ENCODE measurements at regions of chr22 and their contacts with region 1.

Region 1: DNA sequence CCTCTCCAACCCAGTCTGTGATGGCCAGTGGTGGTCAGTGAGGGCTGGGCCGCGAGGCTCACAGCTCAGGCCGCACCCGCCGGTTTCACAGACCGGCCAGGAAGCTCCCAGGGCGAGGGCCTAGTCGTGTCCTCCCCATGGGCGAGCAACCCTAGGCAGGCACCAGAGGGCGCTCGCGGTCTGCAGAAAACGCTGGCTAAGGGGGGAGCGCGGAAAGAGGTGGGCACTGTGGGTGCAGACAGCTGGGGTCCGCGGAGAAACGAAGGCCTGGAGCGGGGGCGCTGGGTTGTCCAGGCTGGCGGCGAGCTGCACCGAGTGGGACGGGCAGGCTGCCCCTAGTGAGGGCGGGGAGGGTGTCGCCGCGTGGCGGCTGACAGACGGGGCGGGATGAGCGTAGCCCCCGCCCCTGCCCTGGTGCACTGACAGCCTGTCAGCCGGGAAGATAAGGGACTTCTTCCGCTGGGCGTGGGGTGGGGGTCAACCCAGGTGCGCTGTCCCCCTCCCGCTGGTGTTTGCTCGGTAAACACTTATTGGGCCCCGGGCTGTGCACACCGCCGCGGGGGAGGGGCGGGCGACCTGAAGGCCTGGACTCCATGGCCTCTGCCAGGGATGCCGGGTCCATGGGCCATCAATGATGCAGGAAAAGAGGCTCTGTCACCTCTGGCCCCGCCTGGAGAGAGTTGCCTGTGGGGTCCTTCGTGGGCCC is 7.5 kb downstream of the GP1BB start:
- DNase-seq: peak; percentile 96
- H3K4me3 ChIP-seq: peak overlapping the region; percentile 47 to 65; a peak in 3 of 4 replicates
- H3K27ac ChIP-seq: no peak overlapping the region
- H3K4me1 ChIP-seq: peaks cover 0 to 26% of the 10 kb centered on the region in 2 experiments; a peak in 1 of 4 replicates
- H3K27me3 ChIP-seq: no peaks in the 10 kb centered on the region
- CTCF ChIP-seq: peak; percentile 91
- EP300 ChIP-seq: no peak
- RAD21 ChIP-seq: peak; percentile 97

Region 2: GRCh38 chr22:19201869-19202798 is 528.7 kb before region 1 on chr22:
- CTCF ChIA-PET with region 1: no interaction called
- POLR2A ChIA-PET with region 1: no interaction called
- DNase-seq: no peak
- H3K4me3 ChIP-seq: no peak overlapping the region
- H3K27ac ChIP-seq: no peak overlapping the region
- H3K4me1 ChIP-seq: peaks cover 0 to 44% of the 10 kb centered on the region in 2 experiments; a peak in 2 of 4 replicates
- H3K27me3 ChIP-seq: no peaks in the 10 kb centered on the region
- CTCF ChIP-seq: no peak
- EP300 ChIP-seq: no peak
- RAD21 ChIP-seq: no peak

Region 3: DNA sequence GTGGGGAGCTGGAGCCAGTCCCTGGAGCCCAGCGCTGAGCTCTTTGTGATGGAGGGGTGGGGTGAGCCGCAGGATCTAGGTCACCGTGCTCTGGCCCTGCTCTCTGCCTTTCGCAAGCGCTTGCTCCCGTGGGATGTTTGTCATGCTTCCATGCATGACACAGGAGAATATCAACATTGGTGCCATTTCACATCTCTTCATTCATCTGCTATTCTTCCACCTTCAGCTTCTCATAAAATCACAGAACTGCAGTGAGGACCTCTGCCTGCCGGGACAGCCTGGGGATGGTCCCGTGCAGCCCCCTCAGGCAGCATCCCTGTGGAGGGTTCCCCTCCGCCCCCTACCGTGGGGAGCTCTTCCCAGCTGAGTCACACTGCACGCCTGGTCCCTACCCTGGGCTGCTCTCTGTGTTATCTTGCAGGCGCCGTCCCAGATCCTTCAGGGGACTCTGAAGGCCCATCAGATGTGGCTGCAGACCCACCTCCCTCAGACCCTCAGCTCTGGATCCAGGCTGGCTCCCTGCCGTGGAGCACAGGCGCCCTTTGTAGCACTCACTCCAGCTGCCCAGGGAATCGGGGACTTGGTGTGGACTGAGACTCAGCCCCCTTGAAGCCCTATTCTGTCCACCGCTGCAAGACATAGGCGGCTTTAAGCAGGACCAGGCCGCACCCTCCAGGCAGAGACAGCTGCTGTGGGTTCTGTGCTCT is 21.6 kb before region 1 on chr22:
- CTCF ChIA-PET with region 1: interaction called, 20 read pairs
- POLR2A ChIA-PET with region 1: no interaction called
- DNase-seq: peak; percentile 48
- H3K4me3 ChIP-seq: no peak overlapping the region
- H3K27ac ChIP-seq: no peak overlapping the region
- H3K4me1 ChIP-seq: peaks cover 0 to 20% of the 10 kb centered on the region in 2 experiments; a peak in 1 of 4 replicates
- H3K27me3 ChIP-seq: no peaks in the 10 kb centered on the region
- CTCF ChIP-seq: no peak
- EP300 ChIP-seq: no peak
- RAD21 ChIP-seq: no peak

Region 4: DNA sequence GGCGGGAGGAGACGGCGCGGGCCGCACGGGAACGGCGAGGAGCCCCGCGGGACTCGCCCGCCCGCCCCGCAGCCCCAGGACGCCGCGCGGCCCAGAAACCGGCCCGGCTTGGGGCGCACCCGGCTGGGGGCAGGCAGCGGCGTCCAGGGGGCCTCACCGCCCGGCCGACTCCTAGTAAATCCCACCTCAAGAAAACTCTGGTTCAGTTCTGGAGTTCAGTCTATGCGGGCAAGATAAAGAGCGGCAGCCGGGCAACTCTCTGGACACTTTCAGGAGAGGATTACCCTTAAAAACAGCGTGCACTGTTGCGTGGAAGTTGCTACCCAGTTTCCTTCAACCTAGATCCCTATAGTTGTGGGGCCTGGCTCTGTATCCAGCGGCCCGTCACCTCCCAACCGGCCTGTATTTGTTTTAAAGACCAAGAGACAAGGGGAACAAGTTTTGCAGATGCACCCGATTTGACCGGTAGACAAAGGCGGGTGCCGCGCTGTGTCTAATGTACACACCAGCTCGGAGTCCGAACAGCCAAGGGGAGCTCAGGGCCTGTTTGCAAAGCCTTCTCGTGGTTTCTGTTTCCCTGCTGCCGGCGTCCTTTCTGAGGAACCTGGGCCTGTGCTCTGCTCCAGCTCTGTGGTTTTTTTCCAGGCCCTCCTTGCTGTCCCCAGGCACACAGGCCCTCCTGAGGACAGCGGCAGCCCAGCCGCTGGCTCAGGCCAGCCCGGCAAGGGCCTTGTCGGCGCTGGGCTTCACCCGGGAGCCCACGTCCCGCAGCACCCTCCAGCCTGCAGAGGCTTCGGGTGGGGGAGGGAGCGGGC is 30.9 kb after region 1 on chr22:
- CTCF ChIA-PET with region 1: interaction called, 15 read pairs
- POLR2A ChIA-PET with region 1: no interaction called
- DNase-seq: no peak
- H3K4me3 ChIP-seq: no peak overlapping the region
- H3K27ac ChIP-seq: no peak overlapping the region
- H3K4me1 ChIP-seq: peaks cover 0 to 4% of the 10 kb centered on the region in 2 experiments; a peak in 2 of 4 replicates
- H3K27me3 ChIP-seq: peaks cover 32% of the 10 kb centered on the region
- CTCF ChIP-seq: no peak
- EP300 ChIP-seq: no peak
- RAD21 ChIP-seq: no peak

Region 5: GRCh38 chr22:19820628-19821522 is 90.1 kb after region 1 on chr22:
- CTCF ChIA-PET with region 1: interaction called, 11 read pairs
- POLR2A ChIA-PET with region 1: no interaction called
- DNase-seq: peak; percentile 47
- H3K4me3 ChIP-seq: no peak overlapping the region
- H3K27ac ChIP-seq: no peak overlapping the region
- H3K4me1 ChIP-seq: peaks cover 0 to 32% of the 10 kb centered on the region in 2 experiments; a peak in 1 of 4 replicates
- H3K27me3 ChIP-seq: no peaks in the 10 kb centered on the region
- CTCF ChIP-seq: no peak
- EP300 ChIP-seq: no peak
- RAD21 ChIP-seq: 0 out of 2 replicates have a peak, but pooled peaks have one; percentile 30

Region 6: DNA sequence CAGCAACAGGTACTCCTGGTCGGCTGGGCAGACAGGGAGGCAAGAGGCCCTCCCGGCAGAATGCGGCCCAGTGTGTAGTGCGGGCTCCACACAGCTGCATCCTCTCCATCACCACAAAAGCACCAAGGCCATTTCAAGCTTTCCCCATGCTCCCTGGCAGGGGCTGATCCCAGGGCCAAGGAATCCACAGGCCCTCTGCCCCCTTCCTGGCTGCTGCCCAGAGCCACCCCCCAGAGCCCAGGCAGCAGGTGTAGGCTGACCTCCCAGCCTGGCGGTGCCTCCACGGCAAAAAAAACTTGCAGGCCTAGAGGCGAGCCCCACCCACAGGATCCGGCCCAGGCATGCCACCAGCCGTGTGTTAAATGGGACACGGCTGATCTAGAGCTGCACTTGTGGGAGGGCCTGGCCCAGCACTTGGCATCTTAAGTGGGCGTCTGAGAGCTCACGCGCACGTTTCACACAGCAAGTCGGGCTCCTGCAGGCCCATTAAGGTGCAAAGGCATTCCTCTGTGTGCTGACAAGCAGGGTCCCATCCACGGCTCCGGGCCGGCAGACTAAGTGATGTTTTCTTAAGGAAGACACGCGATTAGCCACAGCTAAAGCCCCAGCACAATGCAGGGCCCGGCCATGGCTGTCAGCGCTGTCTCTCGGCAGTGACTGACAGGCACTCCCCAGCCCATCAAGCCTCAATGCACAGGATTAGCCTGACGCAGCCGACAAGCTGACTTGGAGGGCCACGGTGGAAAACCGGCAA is 143.7 kb after region 1 on chr22:
- CTCF ChIA-PET with region 1: interaction called, 64 read pairs
- POLR2A ChIA-PET with region 1: interaction called, 4 read pairs
- DNase-seq: peak; percentile 31
- H3K4me3 ChIP-seq: no peak overlapping the region
- H3K27ac ChIP-seq: no peak overlapping the region; a peak in 1 of 4 replicates
- H3K4me1 ChIP-seq: peaks cover 12 to 24% of the 10 kb centered on the region in 2 experiments; a peak in 3 of 4 replicates
- H3K27me3 ChIP-seq: no peaks in the 10 kb centered on the region
- CTCF ChIP-seq: no peak
- EP300 ChIP-seq: no peak
- RAD21 ChIP-seq: no peak

Region 7: DNA sequence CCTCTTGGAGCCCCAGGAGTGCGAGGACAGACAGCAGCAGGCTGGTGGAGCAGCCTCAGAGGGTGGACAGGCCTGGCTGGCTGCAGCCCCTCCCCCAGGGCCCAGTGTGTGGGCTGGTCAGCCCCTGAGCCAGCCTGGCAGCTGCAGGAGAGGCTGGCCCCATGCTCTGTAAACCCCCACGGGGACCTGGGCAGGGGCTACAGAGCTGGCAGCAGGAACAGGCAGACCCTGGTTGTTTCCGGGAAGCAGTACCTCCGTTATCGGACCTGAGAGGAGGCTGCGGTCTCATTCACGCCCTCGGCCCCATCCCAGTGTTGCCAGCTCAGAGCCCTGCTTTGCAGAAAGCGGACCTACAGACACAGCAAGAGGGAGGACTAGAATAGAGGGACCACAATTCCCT is 172.2 kb after region 1 on chr22:
- CTCF ChIA-PET with region 1: interaction called, 116 read pairs
- POLR2A ChIA-PET with region 1: interaction called, 4 read pairs
- DNase-seq: peak; percentile 82
- H3K4me3 ChIP-seq: no peak overlapping the region
- H3K27ac ChIP-seq: peak overlapping the region in 1 of 2 experiments; percentile 85; a peak in 2 of 4 replicates
- H3K4me1 ChIP-seq: peaks cover 0 to 49% of the 10 kb centered on the region in 2 experiments; a peak in 3 of 4 replicates
- H3K27me3 ChIP-seq: no peaks in the 10 kb centered on the region
- CTCF ChIP-seq: no peak
- EP300 ChIP-seq: no peak
- RAD21 ChIP-seq: peak; percentile 13; the same call in 1 of the 2 replicates

Region 8: GRCh38 chr22:19941365-19942082 is 210.7 kb after region 1 on chr22 and contains the starts of genes COMT and TXNRD2:
- CTCF ChIA-PET with region 1: interaction called, 13 read pairs
- POLR2A ChIA-PET with region 1: no interaction called
- DNase-seq: peak; percentile 96
- H3K4me3 ChIP-seq: peak within 1 kb of the TSS; percentile 73 to 75
- H3K27ac ChIP-seq: peak within 1 kb of the TSS; percentile 91 to 96
- H3K4me1 ChIP-seq: peaks cover 14 to 23% of the 10 kb centered on the region in 2 experiments; a peak in 3 of 4 replicates
- H3K27me3 ChIP-seq: no peaks in the 10 kb centered on the region
- CTCF ChIP-seq: no peak
- EP300 ChIP-seq: 0 out of 4 replicates have a peak, but pooled peaks of 1 of the 2 experiments have one; percentile 11
- RAD21 ChIP-seq: no peak
- polyA plus RNA-seq, gene COMT: 205 and 343 TPM in 2 replicates
- polyA plus RNA-seq, gene TXNRD2: 33.5 and 34.7 TPM in 2 replicates